ENCODE measurements at regions of chr3 and their contacts with region 1.

Region 1: GRCh38 chr3:129052675-129053074 is 7.9 kb upstream of the GP9 start:
- DNase-seq: peak; percentile 73
- H3K4me3 ChIP-seq: no peak overlapping the region
- H3K27ac ChIP-seq: no peak overlapping the region
- H3K4me1 ChIP-seq: peaks cover 15% of the 10 kb centered on the region
- H3K27me3 ChIP-seq: no peaks in the 10 kb centered on the region
- CTCF ChIP-seq: no peak
- POLR2A ChIP-seq: no peak

Region 2: GRCh38 chr3:128698211-128699064 is 354.2 kb before region 1 on chr3:
- CTCF ChIA-PET with region 1: no interaction called
- POLR2A ChIA-PET with region 1: no interaction called
- dilution Hi-C with region 1: no loop called
- intact Hi-C with region 1: no loop called
- DNase-seq: peak; percentile 23
- H3K4me3 ChIP-seq: peak overlapping the region; percentile 38 to 54 (median 52)
- H3K27ac ChIP-seq: no peak overlapping the region
- H3K4me1 ChIP-seq: no peaks in the 10 kb centered on the region
- H3K27me3 ChIP-seq: peaks cover 0 to 2% of the 10 kb centered on the region in 2 experiments
- CTCF ChIP-seq: no peak
- POLR2A ChIP-seq: no peak

Region 3: GRCh38 chr3:129016356-129016719 is 36.3 kb before region 1 on chr3:
- CTCF ChIA-PET with region 1: interaction called, 25 read pairs
- POLR2A ChIA-PET with region 1: no interaction called
- dilution Hi-C with region 1: no loop called
- intact Hi-C with region 1: no loop called
- DNase-seq: peak; percentile 45
- H3K4me3 ChIP-seq: peak overlapping the region in 1 of 3 experiments; percentile 2
- H3K27ac ChIP-seq: peak overlapping the region; percentile 86
- H3K4me1 ChIP-seq: peaks cover 33% of the 10 kb centered on the region
- H3K27me3 ChIP-seq: no peaks in the 10 kb centered on the region
- CTCF ChIP-seq: no peak
- POLR2A ChIP-seq: no peak

Region 4: DNA sequence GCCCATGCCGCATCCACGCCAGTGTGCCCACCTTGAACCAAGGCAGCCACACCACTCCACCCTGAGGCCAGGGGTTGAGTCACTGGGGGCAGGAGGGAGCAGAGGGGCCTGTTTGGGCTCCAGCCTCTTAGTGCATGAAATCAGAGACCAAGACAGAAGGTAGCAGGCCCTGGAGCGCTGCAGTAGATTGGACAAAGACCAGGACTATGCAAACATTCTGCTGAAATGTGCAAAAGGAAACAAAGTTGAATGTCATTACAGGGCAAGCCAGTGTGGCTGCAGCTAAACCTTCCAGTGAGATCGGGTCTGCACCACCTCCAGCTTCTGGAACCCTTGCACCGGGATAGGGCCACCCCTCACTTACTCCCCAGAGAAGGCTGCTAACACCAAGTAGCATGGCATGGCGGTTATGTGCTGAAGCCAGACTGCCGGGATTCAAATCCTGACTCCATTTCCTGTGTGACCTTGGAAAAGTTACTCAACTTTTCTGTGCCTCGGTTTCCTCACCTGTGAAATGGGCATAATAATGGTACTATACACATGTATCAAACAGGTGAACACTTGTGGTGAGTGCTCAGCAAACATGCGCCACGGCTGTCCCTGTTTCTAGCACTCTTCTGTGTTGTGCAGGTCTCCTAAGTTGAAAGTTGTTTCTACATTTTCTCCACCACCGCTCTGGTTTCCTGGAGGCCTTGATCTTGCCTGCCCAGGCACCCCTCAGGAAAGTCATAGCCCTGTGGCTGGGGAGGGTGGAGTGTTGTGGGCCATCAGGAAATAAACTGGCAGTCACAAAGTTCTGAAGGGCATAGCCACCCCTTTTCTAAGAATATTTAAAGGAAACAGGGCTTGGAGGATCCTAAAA is 17.1 kb before region 1 on chr3:
- CTCF ChIA-PET with region 1: interaction called, 35 read pairs
- POLR2A ChIA-PET with region 1: no interaction called
- dilution Hi-C with region 1: no loop called
- intact Hi-C with region 1: no loop called
- DNase-seq: no peak
- H3K4me3 ChIP-seq: no peak overlapping the region
- H3K27ac ChIP-seq: no peak overlapping the region
- H3K4me1 ChIP-seq: no peaks in the 10 kb centered on the region
- H3K27me3 ChIP-seq: no peaks in the 10 kb centered on the region
- CTCF ChIP-seq: no peak
- POLR2A ChIP-seq: no peak

Region 5: DNA sequence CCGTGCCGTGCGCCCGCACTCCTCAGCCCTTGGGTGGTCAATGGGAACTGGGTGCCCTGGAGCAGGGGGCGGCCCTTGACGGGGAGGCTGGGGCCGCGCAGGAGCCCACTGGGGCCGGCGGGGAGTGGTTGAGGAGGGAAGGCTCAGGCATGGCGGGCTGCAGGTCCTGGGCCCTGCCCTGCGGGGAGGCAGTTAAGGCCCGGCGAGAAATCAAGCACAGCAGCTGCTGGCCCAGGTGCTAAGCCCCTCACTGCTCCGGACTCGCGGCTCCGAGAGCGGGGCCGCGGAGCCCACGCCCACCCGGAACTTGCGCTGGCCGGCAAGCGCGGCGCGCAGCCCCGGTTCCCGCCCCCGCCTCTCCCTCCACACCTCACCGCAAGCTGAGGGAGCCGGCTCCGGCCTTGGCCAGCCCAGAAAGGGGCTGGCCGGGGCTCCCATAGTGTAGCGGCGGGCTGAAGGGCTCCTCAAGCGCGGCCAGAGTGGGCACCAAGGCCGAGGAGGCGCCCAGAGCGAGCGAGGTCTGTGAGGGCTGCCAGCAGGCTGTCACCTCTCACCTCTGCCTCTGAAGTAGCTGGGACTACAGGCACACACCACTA is 15.7 kb after region 1 on chr3:
- CTCF ChIA-PET with region 1: interaction called, 91 read pairs
- POLR2A ChIA-PET with region 1: interaction called, 7 read pairs
- dilution Hi-C with region 1: no loop called
- intact Hi-C with region 1: no loop called
- DNase-seq: peak; percentile 44
- H3K4me3 ChIP-seq: peak overlapping the region in 1 of 3 experiments; percentile 28
- H3K27ac ChIP-seq: no peak overlapping the region
- H3K4me1 ChIP-seq: peaks cover 4% of the 10 kb centered on the region
- H3K27me3 ChIP-seq: no peaks in the 10 kb centered on the region
- CTCF ChIP-seq: no peak
- POLR2A ChIP-seq: peak; percentile 27

Region 6: GRCh38 chr3:129120254-129121004 is 67.8 kb after region 1 on chr3:
- CTCF ChIA-PET with region 1: interaction called, 31 read pairs
- POLR2A ChIA-PET with region 1: interaction called, 4 read pairs
- dilution Hi-C with region 1: no loop called
- intact Hi-C with region 1: loop called (anchors 1 kb)
- DNase-seq: peak; percentile 87
- H3K4me3 ChIP-seq: peak overlapping the region; percentile 64 to 79 (median 66)
- H3K27ac ChIP-seq: peak overlapping the region; percentile 66
- H3K4me1 ChIP-seq: peaks cover 27% of the 10 kb centered on the region
- H3K27me3 ChIP-seq: no peaks in the 10 kb centered on the region
- CTCF ChIP-seq: peak in 1 of 2 donors; percentile 22
- POLR2A ChIP-seq: peak; percentile 79

Measured in endothelial cell of umbilical vein (primary cell).